ENCODE measurements at regions of chr1 and their contacts with region 1.

Region 1: DNA sequence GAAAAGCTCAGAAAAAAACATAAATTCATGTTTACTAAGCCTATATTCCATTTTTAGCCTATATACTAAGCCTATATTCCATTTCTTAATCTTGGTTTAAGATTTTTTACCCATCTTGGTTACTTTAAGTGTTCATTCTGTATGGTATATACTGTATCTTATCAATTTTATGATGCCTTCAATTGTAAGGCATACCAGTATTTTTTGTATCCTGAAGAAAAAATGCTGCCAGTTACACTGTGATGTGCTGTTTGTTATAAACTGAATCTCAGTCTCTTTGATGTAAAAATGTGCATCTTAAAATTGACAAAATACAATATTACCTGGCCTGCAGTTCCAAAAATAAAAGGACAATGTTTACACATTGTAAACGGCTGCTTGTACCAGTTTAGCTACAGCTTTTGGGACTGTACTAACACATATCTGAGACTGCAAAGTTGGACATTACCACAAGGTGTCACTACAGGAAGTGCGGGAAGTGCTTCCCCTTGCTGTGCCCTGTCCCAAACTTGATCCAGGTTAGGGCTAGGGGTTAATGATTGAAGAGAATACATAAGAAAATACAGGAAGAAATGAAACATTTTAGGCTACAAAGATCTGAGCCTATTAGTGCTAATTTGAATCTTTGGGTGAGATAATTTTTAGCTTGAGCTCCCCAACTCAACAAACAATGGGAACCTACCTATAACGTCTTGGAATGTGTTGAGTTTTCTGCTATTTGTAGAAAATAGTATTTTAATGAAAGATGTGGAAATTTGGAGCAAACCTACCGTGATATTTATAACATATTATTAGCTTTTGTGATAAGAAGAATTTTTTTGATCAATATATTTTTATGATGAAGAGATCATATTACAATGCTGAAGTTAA is 108.9 kb downstream of the LBR start:
- DNase-seq: peak; percentile 36
- ATAC-seq: peak; percentile 94
- H3K4me3 ChIP-seq: no peak overlapping the region
- H3K27ac ChIP-seq: no peak overlapping the region
- H3K4me1 ChIP-seq: no peaks in the 10 kb centered on the region
- H3K27me3 ChIP-seq: no peaks in the 10 kb centered on the region
- CTCF ChIP-seq: peak; percentile 66
- POLR2A ChIP-seq: no peak
- RAD21 ChIP-seq: peak; percentile 58

Region 2: DNA sequence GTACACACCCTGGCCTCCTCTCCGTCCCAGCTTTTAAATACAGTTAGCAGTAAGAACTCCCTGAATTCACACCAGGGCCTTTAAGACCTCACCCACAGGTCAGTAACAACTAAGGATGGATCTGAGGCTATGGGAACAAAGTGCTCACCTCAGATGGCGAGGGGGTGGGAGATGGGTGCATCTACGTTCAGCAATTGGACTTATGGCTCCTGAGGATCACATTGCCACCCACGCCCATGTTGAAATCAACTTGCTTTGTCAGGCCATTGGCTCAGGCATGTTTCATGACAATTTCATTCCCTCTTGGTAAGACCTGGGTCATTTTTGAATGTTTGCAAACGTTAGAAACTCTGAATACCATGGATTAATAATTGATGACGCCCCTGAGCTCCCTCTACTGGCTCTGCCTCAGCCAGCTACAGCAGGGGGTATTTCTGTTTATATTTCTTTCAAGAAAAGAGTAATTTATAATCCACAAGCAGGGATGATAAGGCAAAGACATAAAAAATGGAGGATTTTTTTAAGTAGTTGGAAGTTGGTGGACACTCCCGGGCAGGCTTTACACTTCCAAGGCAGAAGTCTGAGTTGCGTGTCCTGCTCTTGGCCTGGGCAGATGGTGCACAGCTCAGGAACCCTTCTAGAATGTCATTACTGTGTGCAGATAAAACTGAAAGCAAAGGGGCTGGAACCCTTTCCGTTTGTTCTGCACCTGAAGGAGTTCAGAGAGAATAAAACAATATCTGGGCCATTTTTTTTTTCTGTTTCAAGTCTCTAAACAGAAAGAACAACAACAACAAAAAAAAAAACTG is 122.6 kb after region 1 on chr1:
- CTCF ChIA-PET with region 1: interaction called, 8 read pairs
- POLR2A ChIA-PET with region 1: no interaction called
- dilution Hi-C with region 1: no loop called
- in situ Hi-C with region 1: no loop called
- intact Hi-C with region 1: loop called (anchors 5 kb)
- DNase-seq: no peak
- ATAC-seq: no peak
- H3K4me3 ChIP-seq: no peak overlapping the region
- H3K27ac ChIP-seq: no peak overlapping the region
- H3K4me1 ChIP-seq: peaks cover 4% of the 10 kb centered on the region; the same call in 1 of the 2 replicates
- H3K27me3 ChIP-seq: 0 out of 2 replicates have a peak, but pooled peaks cover 1% of the 10 kb centered on the region
- CTCF ChIP-seq: peak; percentile 40
- POLR2A ChIP-seq: no peak
- RAD21 ChIP-seq: no peak

Region 3: GRCh38 chr1:225454733-225455132 is 135.8 kb after region 1 on chr1:
- CTCF ChIA-PET with region 1: no interaction called
- POLR2A ChIA-PET with region 1: no interaction called
- dilution Hi-C with region 1: no loop called
- in situ Hi-C with region 1: no loop called
- intact Hi-C with region 1: no loop called
- DNase-seq: peak; percentile 89
- ATAC-seq: peak; percentile 66
- H3K4me3 ChIP-seq: no peak overlapping the region
- H3K27ac ChIP-seq: no peak overlapping the region
- H3K4me1 ChIP-seq: peaks cover 6% of the 10 kb centered on the region
- H3K27me3 ChIP-seq: no peaks in the 10 kb centered on the region
- CTCF ChIP-seq: no peak
- POLR2A ChIP-seq: no peak
- RAD21 ChIP-seq: no peak

Measured in IMR-90 (cell line).